Activated CD4-positive, alpha-beta T cell treated with anti-CD3 and anti-CD28 coated beads, Interleukin-2, amount 10 ng/mL, durations not matched to agents 24 days and 14 days (primary cell): ENCODE measurements at regions of chr2 and their contacts with region 1.

Region 1: GRCh38 chr2:46632349-46632748 is 153.0 kb downstream of the TMEM247 start:
- DNase-seq: no peak
- H3K4me3 Mint-ChIP-seq: no peak overlapping the region
- H3K27ac Mint-ChIP-seq: no peak overlapping the region
- H3K4me1 Mint-ChIP-seq: peaks cover 8% of the 10 kb centered on the region
- H3K27me3 Mint-ChIP-seq: no peaks in the 10 kb centered on the region

Region 2: GRCh38 chr2:45851613-45852304 is 780.6 kb before region 1 on chr2:
- intact Hi-C with region 1: no loop called
- DNase-seq: no peak
- H3K4me3 Mint-ChIP-seq: no peak overlapping the region
- H3K27ac Mint-ChIP-seq: no peak overlapping the region
- H3K4me1 Mint-ChIP-seq: peaks cover 32% of the 10 kb centered on the region
- H3K27me3 Mint-ChIP-seq: no peaks in the 10 kb centered on the region

Region 3: DNA sequence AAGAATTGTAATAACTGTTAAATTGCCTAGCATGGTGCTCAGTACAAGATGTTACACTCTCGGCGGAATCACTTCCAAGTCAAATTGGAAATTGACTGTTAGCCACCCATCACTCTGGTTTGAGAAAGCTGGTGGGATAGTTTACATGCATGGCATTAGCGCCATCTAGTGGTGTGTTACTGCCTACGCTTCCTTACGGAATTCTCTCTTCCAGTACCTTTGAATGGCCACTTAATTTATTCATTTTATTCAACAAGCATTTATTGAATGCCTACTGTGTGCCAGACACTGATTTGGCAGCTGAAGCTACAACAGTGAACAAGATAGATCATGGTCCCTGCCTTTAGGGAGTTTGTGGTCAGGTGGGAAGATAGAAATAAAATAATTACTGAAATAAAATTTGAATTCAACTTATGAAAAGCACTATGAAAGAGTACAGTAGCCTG is 18.2 kb after region 1 on chr2:
- intact Hi-C with region 1: loop called (anchors 2 kb)
- DNase-seq: peak; percentile 90
- H3K4me3 Mint-ChIP-seq: no peak overlapping the region
- H3K27ac Mint-ChIP-seq: no peak overlapping the region
- H3K4me1 Mint-ChIP-seq: no peaks in the 10 kb centered on the region
- H3K27me3 Mint-ChIP-seq: peaks cover 26% of the 10 kb centered on the region

Region 4: GRCh38 chr2:46776687-46777327 is 144.5 kb after region 1 on chr2:
- intact Hi-C with region 1: loop called (anchors 1 kb)
- DNase-seq: peak; percentile 82
- H3K4me3 Mint-ChIP-seq: no peak overlapping the region
- H3K27ac Mint-ChIP-seq: no peak overlapping the region
- H3K4me1 Mint-ChIP-seq: no peaks in the 10 kb centered on the region
- H3K27me3 Mint-ChIP-seq: peaks cover 12% of the 10 kb centered on the region

Region 5: GRCh38 chr2:46887028-46887885 is 254.9 kb after region 1 on chr2:
- intact Hi-C with region 1: loop called (anchors 1 kb)
- DNase-seq: no peak
- H3K4me3 Mint-ChIP-seq: no peak overlapping the region
- H3K27ac Mint-ChIP-seq: peak overlapping the region; percentile 55
- H3K4me1 Mint-ChIP-seq: peaks cover 2% of the 10 kb centered on the region
- H3K27me3 Mint-ChIP-seq: peaks cover 16% of the 10 kb centered on the region